PC-3 (cell line): ENCODE measurements at regions of chr11 and their contacts with region 1.

Region 1: GRCh38 chr11:57311109-57311936 is 13.4 kb downstream of the TNKS1BP1 start:
- DNase-seq: peak; percentile 96
- ATAC-seq: peak; percentile 94
- H3K4me3 ChIP-seq: peak overlapping the region; percentile 67
- H3K27ac ChIP-seq: peak overlapping the region; percentile 86
- H3K4me1 ChIP-seq: peaks cover 53% of the 10 kb centered on the region
- H3K27me3 ChIP-seq: no peaks in the 10 kb centered on the region
- CTCF ChIP-seq: no peak

Region 2: DNA sequence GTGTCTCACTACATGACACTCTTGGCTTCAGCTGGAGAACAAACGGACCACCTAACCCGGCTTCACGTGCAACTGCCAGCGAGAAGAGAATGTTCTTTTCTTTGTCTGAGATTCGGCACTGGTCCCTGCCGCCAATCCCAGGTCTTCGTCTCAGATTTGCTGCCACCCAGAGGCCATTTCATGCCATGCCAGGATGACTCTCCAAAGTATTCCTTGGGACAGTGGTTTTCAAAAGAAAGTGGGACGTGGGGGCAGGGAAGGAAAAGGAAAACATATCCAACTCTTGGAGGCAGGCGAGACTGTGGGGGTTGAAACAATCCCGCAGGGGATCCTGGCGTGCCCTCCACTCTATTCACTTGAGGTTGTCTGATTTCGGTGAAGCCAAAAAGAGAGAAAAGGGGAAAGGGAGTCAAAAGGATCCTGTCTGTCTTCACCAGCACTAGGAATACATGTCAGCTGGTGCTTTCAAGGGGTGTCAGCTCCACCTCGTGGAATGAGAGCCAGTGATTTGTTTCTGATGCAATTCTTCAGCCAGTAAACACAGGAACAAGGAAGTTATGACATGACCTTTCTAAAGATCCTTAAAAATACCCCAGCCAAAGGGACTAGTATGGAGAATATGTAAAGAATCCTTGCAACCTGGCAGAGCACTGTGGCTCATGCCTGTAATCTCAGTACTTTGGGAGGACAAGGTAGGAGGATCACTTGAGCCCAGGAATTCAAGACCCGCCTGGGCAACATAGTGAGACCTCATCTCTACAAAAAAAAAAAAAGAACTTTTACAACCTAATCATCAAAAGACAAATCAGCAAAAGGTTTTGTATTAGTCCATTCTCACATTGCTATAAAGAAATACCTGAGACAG is 33.2 kb before region 1 on chr11:
- CTCF ChIA-PET with region 1: no interaction called
- POLR2A ChIA-PET with region 1: interaction called, 3 read pairs
- intact Hi-C with region 1: loop called (anchors 2 kb)
- DNase-seq: peak; percentile 89
- ATAC-seq: peak; percentile 96
- H3K4me3 ChIP-seq: peak overlapping the region; percentile 51
- H3K27ac ChIP-seq: no peak overlapping the region
- H3K4me1 ChIP-seq: peaks cover 20% of the 10 kb centered on the region
- H3K27me3 ChIP-seq: no peaks in the 10 kb centered on the region
- CTCF ChIP-seq: peak; percentile 96